ENCODE measurements at regions of chr1 and their contacts with region 1.

Region 1: DNA sequence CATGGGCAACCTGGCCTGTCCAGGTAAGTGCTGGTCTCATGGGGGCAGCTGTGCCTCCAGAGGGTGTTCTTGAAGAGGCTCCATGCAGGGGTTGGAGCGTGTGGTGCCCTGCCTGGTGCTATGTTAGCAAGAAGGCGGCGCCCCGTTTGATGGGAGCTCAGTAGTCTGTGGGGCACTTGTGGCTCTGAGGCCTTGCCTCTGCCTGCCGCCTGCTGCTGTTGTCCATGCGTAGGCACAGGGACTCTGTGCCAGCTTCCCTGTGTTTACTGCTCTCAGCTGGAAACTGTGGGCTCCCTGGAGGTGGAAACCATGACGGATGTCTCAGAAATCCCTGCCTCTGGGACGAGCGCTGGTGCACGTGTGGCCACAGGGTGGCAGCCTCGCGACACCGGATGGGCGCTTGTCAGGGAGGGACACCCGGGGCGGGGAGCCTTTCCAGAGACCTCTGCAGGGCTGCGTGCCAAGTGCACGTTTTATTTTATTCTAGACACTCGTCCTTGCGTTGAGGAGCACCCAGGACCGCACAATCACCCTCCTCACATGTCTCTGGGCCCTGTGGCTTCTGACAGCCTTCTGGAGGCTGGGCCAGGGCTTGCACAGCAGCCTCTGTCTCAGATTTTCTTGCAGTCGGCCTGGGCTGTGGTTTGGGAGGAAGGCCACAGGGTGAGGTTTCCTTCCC is 27.1 kb downstream of the SNAP47 start:
- DNase-seq: peak; percentile 81
- H3K4me3 Mint-ChIP-seq: peak overlapping the region; percentile 47
- H3K27ac Mint-ChIP-seq: peak overlapping the region; percentile 77
- H3K4me1 Mint-ChIP-seq: peaks cover 91% of the 10 kb centered on the region
- H3K27me3 Mint-ChIP-seq: no peaks in the 10 kb centered on the region

Region 2: DNA sequence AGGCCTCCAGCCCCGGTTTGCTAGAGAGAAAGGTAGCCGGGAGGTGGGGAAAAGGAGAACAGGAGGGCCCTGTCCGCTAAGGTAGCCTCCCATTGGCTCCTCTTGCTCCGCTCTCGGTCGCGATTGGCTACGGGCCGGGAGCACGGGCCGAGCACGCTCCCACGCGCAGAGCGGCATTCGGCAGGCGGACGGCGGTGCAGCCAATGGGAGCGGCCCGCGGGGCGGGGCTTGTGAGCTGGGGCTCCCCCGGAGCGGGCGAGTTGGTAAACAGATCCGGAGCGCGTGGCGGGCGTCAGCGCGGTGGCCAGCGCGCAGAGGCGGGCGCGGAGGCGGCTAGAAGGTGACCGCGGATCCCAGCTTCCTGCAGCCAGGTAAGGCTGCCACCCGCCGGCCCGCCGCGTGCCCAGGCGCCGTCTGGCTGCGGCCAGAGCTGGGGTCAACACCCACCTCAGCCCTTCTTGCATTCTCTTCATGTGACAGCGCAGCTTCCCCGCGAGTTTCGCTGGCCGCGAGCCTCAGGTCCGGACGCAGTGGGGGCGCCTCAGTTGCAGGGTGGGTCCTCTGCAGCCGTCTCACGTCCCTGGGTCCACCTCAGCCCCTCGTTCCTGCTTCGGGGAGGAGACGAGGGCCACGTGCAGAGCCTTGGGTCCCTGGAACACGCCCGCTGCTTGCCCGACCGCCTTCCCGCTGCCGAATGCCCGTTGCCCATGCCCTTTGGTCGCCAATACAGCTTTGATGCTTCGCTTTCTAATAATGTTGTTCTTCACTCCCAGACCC is 822.2 kb before region 1 on chr1 and contains the start of gene COQ8A:
- intact Hi-C with region 1: loop called (anchors 10 kb)
- DNase-seq: peak; percentile 100
- H3K4me3 Mint-ChIP-seq: peak within 1 kb of the TSS; percentile 89
- H3K27ac Mint-ChIP-seq: peak within 1 kb of the TSS; percentile 97
- H3K4me1 Mint-ChIP-seq: peaks cover 41% of the 10 kb centered on the region
- H3K27me3 Mint-ChIP-seq: no peaks in the 10 kb centered on the region
- total RNA-seq, gene COQ8A: 33.1 and 33.8 TPM in 2 replicates

Region 3: DNA sequence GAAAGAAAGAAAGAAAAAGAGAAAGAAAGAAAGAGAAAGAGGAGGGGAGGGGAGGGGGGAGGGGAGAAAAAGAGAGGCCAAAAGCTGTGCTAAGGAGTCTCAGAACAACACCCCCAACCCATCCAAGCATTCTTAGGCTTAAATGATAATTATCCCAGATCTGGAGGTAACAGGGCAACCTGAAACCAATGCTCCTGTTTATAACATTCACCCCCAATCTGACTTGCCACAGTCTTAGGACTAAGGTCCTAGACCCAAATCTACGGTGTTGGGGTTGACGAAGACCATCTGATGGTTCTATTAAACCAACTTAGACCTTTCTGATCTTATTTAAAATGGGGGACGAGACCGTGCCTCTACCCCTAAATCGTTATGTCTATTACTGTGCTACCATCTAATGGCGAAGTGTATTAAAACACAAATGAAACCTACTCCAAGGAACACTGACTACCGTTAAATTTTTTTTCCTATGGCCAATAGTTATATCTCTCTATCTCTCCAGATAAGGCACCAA is 324.8 kb before region 1 on chr1:
- intact Hi-C with region 1: no loop called
- DNase-seq: no peak
- H3K4me3 Mint-ChIP-seq: no peak overlapping the region
- H3K27ac Mint-ChIP-seq: no peak overlapping the region
- H3K4me1 Mint-ChIP-seq: no peaks in the 10 kb centered on the region
- H3K27me3 Mint-ChIP-seq: peaks cover 9% of the 10 kb centered on the region

Region 4: DNA sequence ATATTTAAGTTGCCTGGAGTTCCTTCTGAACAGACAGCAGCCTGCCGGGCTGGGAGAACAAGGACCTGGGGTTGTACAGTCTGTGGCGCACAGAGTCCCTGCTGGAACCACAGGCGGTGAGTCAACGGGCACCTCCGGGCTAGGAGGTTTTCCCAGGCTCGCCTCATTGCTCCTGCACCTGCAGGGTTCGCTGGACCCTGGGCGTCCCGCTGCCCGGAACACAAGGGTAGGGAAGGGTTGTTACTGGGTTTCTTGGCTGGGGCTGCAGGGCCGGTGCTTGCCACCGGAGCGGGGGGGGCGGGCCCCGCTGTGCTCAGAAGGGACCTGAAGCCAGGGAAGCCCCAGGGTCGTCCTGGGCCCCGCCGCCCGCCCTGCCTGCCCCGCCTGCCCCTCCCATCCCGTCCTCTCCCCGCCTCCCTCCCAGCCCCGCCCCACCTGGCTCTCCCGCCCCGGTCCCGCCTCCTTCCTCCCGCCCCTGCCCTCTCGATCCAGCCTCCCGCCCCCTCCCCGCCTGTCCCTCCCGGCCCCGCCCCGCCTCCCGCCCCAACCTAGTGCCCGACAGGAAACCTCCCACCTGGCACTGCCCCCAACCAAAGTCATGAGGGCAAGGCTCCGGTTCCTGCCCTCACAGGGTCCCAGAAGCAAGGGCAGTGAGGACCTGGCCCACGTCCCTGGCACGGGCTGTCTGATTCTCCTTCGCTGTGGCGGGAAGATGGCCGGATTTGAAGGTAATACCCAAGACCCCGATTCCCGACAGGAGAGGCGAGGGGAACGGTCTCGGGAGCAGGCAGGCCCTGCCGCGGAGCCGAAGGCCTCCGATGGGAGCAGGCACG is 34.1 kb before region 1 on chr1:
- intact Hi-C with region 1: loop called (anchors 1 kb)
- DNase-seq: peak; percentile 37
- H3K4me3 Mint-ChIP-seq: peak overlapping the region; percentile 85
- H3K27ac Mint-ChIP-seq: peak overlapping the region; percentile 72
- H3K4me1 Mint-ChIP-seq: peaks cover 5% of the 10 kb centered on the region
- H3K27me3 Mint-ChIP-seq: peaks cover 7% of the 10 kb centered on the region

Region 5: GRCh38 chr1:227748496-227749182 is 13.7 kb before region 1 on chr1:
- intact Hi-C with region 1: loop called (anchors 1 kb)
- DNase-seq: peak; percentile 18
- H3K4me3 Mint-ChIP-seq: peak overlapping the region; percentile 9
- H3K27ac Mint-ChIP-seq: peak overlapping the region; percentile 50
- H3K4me1 Mint-ChIP-seq: peaks cover 32% of the 10 kb centered on the region
- H3K27me3 Mint-ChIP-seq: no peaks in the 10 kb centered on the region

Region 6: GRCh38 chr1:227864882-227865281 is 102.5 kb after region 1 on chr1:
- intact Hi-C with region 1: no loop called
- DNase-seq: no peak
- H3K4me3 Mint-ChIP-seq: no peak overlapping the region
- H3K27ac Mint-ChIP-seq: no peak overlapping the region
- H3K4me1 Mint-ChIP-seq: peaks cover 7% of the 10 kb centered on the region
- H3K27me3 Mint-ChIP-seq: peaks cover 4% of the 10 kb centered on the region

Region 7: DNA sequence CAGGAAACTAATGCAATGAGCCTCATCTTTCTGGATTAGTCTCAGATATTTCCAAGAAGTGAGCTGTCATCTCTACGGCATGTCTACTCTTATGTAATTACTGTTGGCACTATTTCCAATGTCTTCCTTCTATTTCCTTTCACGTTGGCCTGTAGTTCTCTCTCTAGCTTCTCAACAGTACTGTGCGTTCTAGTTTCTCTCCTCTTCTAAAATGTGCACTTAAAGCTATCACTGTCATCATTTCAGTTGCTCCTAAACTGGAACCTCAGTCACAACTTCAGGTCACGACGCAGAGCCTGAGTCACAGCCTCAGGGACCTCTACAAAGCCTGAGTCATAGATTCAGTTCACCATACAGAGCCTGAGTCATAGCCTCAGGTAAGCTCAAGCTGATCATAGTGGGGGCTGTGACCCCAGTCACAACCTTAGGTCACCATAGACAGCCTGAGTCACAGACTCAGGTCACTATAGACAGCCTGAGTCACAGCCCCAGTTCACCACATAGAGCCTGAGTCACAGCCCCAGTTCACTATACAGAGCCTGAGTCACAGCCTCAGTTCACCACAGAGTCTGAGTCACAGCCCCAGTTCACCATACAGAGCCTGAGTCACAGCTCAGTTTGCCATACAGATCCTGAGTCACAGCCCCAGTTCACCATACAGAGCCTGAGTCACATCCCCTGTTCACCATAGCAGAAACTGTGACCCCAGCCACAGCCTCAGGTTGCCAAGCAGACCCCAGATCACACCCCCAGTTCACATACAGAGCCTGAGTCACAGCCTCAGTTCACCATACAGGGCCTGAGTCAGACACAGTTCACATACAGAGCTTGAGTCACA is 172.3 kb after region 1 on chr1:
- intact Hi-C with region 1: loop called (anchors 5 kb)
- DNase-seq: peak; percentile 22
- H3K4me3 Mint-ChIP-seq: no peak overlapping the region
- H3K27ac Mint-ChIP-seq: peak overlapping the region; percentile 29
- H3K4me1 Mint-ChIP-seq: peaks cover 19% of the 10 kb centered on the region
- H3K27me3 Mint-ChIP-seq: peaks cover 7% of the 10 kb centered on the region

Region 8: GRCh38 chr1:227954163-227954850 is 191.9 kb after region 1 on chr1:
- intact Hi-C with region 1: loop called (anchors 1 kb)
- DNase-seq: no peak
- H3K4me3 Mint-ChIP-seq: no peak overlapping the region
- H3K27ac Mint-ChIP-seq: no peak overlapping the region
- H3K4me1 Mint-ChIP-seq: no peaks in the 10 kb centered on the region
- H3K27me3 Mint-ChIP-seq: peaks cover 28% of the 10 kb centered on the region

Region 9: GRCh38 chr1:228486596-228487335 is 724.4 kb after region 1 on chr1:
- intact Hi-C with region 1: loop called (anchors 10 kb)
- DNase-seq: peak; percentile 84
- H3K4me3 Mint-ChIP-seq: peak overlapping the region; percentile 97
- H3K27ac Mint-ChIP-seq: peak overlapping the region; percentile 99
- H3K4me1 Mint-ChIP-seq: peaks cover 29% of the 10 kb centered on the region
- H3K27me3 Mint-ChIP-seq: peaks cover 7% of the 10 kb centered on the region